ENCODE measurements at regions of chr19 and their contacts with region 1.

Region 1: DNA sequence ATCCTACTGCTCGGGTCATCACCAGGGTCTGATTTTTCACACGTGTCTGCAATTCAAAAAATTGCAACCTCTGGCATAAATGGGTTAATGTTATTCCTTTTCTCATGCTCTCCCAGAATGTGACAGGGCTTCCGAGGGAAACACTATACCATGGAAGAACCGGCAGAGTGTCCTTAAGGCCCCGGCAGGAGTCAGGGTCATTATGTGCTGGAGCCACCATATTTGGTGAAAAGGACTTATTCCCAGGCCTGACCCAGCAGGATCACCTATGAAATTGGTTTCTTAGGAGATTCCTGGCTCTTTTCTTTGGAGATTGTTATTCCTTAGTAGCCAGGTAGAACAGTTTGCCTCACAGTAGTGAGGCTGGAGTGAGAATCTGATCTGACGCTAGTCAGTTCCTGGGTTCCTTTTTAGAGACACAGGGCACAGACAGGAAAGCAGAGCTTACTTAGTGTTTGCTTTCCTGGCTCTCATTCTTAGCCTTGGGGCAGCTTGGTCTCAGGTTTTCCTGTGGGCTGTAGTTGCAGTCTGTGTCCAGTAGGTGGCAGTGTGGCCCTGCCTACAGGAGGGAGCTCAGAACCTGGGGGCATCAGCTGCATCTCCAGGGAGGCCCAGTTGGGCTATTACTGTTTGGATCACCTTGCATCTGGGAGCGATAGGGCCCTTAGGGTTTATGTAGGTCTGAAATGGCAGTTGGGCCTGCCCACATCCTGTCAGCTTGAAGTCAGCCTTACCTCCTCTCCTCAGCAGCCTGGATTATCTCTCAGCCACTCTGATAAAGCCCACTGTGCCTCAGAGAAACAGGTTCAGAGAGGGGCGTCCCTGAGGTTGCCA is 12.4 kb downstream of the SNRNP70 start:
- H3K4me3 ChIP-seq: no peak overlapping the region
- H3K27ac ChIP-seq: peak overlapping the region; percentile 48
- H3K4me1 ChIP-seq: peaks cover 8% of the 10 kb centered on the region
- CTCF ChIP-seq: peak; percentile 94

Region 2: DNA sequence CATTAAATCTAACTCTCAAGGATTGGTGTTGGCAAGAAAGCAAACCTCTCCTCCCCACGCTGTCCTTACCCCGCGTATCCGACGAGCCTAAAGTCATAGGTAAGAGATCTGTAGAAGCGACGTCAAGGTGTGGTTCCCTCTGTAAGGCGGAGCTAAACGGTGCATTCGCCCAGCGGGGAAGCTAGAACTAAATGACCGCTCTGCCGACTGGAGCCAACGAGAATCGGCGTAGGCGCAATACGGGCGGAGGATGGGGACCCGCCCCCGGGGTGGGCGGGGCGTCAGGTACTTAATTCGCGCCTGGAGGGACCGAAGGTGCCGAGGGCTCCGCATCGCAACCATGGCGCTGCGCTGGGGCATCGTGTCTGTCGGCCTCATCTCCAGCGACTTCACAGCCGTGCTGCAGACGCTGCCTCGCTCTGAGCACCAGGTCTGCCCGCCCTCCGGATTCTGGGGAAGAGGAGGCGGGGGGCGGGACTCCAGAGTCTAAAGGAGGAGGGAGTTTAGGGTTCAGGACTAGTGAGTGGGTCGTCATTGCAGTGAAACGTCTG is 164.2 kb before region 1 on chr19 and contains the start of gene DHDH:
- CTCF ChIA-PET with region 1: no interaction called
- POLR2A ChIA-PET with region 1: no interaction called
- H3K4me3 ChIP-seq: peak within 1 kb of the TSS; percentile 35
- H3K27ac ChIP-seq: no peak within 1 kb of the TSS
- H3K4me1 ChIP-seq: peaks cover 3% of the 10 kb centered on the region; the same call in 1 of the 2 replicates
- CTCF ChIP-seq: no peak; the same call in 1 of the 2 replicates

Region 3: GRCh38 chr19:49085020-49085867 is 12.4 kb before region 1 on chr19 and contains the start of gene SNRNP70:
- CTCF ChIA-PET with region 1: interaction called, 36 read pairs
- POLR2A ChIA-PET with region 1: interaction called, 3 read pairs
- H3K4me3 ChIP-seq: peak within 1 kb of the TSS; percentile 89
- H3K27ac ChIP-seq: peak within 1 kb of the TSS; percentile 92
- H3K4me1 ChIP-seq: peaks cover 5% of the 10 kb centered on the region; the same call in 1 of the 2 replicates
- CTCF ChIP-seq: peak; percentile 65; the same call in 1 of the 2 replicates

Region 4: DNA sequence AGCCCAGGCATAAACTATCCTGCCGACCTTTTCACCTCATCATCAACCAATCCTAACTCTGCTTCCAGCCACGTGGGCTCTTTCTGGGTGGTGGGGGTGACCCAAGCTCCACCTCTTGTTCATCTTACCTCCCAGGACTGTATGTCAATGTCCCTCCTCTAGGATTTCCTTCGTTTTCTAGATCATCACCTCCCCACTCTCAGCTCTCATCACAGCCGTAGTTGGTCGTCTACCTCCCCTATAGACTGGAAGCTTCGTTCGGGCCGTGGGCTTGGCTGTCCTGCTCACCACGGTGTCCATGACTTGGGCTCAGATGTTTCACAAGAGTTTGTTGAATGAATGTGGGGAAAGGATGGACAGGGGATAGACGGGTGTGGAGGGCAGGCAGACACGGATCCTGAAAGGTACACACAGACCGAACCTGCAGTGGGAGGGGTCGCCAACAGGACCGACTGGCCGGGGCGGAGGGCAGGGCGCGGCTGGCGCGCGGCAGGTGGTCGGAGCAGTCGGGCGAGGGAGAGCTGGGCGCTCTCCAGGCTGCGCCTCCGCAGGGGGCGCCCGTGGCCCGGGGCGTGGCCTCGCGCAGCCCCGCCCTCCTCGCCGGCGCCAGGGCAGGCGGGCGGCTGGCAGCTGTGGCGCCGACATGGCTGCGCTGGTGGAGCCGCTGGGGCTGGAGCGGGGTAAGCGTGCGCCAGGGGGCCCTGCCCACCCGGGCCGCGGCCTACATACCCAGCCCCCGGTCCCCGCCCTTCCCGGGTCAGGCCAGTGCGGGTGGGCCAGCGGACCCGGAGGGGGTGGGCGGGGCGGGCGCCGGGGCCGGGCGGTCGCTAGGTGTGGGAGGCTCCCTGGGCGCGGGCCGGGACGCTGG is 16.3 kb after region 1 on chr19 and contains the start of gene LIN7B:
- CTCF ChIA-PET with region 1: interaction called, 104 read pairs
- POLR2A ChIA-PET with region 1: interaction called, 10 read pairs
- H3K4me3 ChIP-seq: peak within 1 kb of the TSS; percentile 69
- H3K27ac ChIP-seq: peak within 1 kb of the TSS; percentile 84
- H3K4me1 ChIP-seq: peaks cover 14% of the 10 kb centered on the region
- CTCF ChIP-seq: peak; percentile 31; the same call in 1 of the 2 replicates

Region 5: GRCh38 chr19:49119411-49120324 is 22.0 kb after region 1 on chr19 and contains the start of gene PPFIA3:
- CTCF ChIA-PET with region 1: interaction called, 33 read pairs
- POLR2A ChIA-PET with region 1: interaction called, 8 read pairs
- H3K4me3 ChIP-seq: peak within 1 kb of the TSS; percentile 54
- H3K27ac ChIP-seq: peak within 1 kb of the TSS; percentile 82; the same call in 1 of the 2 replicates
- H3K4me1 ChIP-seq: peaks cover 8% of the 10 kb centered on the region
- CTCF ChIP-seq: no peak

Region 6: DNA sequence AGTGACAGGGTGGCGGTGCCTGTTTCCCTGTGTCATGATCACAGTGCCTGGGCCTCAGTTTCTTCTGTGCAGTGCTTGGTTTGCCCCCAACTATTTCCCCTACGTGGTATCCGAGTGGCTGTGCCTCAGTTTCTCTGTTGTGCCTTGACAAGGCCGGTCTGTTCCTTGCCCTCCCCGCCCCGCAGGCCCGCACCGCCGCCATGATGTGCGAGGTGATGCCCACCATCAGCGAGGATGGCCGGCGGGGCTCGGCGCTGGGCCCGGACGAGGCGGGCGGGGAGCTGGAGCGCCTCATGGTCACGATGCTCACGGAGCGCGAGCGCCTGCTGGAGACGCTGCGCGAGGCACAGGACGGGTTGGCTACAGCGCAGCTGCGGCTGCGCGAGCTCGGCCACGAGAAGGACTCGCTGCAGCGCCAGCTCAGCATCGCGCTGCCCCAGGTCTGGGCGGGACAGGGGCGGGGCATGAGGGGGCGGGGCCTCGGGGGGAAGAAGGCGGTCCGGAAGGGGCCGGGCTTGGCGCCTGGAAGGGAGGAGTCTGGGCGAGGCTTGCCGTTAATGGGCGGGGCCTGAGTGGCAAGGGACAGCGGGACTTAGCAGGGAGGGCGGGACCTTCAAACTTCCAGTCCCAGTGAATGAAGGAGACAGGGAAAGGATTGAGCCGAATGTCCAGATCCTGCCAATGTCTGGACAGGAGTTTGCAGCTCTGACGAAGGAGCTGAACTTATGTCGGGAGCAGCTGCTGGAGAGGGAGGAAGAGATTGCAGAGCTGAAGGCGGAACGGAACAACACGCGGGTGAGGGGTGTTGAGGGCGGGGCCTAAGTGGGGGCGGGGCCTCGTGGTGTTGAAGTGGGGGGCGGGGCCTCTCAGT is 30.2 kb after region 1 on chr19:
- CTCF ChIA-PET with region 1: interaction called, 10 read pairs
- POLR2A ChIA-PET with region 1: interaction called, 7 read pairs
- H3K4me3 ChIP-seq: peak overlapping the region; percentile 53
- H3K27ac ChIP-seq: peak overlapping the region; percentile 60; the same call in 1 of the 2 replicates
- H3K4me1 ChIP-seq: peaks cover 7% of the 10 kb centered on the region
- CTCF ChIP-seq: peak; percentile 85

Region 7: GRCh38 chr19:49210108-49210900 is 112.6 kb after region 1 on chr19:
- CTCF ChIA-PET with region 1: interaction called, 105 read pairs
- POLR2A ChIA-PET with region 1: interaction called, 3 read pairs
- H3K4me3 ChIP-seq: no peak overlapping the region
- H3K27ac ChIP-seq: no peak overlapping the region
- H3K4me1 ChIP-seq: peaks cover 6% of the 10 kb centered on the region; the same call in 1 of the 2 replicates
- CTCF ChIP-seq: no peak